ENCODE measurements at regions of chr2 and their contacts with region 1.

Region 1: GRCh38 chr2:230411570-230412370 is 4.2 kb upstream of the SP100 start:
- DNase-seq: peak; percentile 92
- H3K4me3 ChIP-seq: peak overlapping the region; percentile 64 to 81 (median 70)
- H3K27ac ChIP-seq: peak overlapping the region; percentile 83 to 92 (median 92)
- H3K4me1 ChIP-seq: peaks cover 46 to 58% (median 49%) of the 10 kb centered on the region in 4 donors
- H3K27me3 ChIP-seq: no peaks in the 10 kb centered on the region
- CTCF ChIP-seq: no peak
- EP300 ChIP-seq: no peak
- POLR2A ChIP-seq: peak; percentile 11

Region 2: GRCh38 chr2:230219419-230220331 is 192.1 kb before region 1 on chr2 and contains the start of gene SP110:
- intact Hi-C with region 1: loop called (anchors 10 kb)
- DNase-seq: peak; percentile 95
- H3K4me3 ChIP-seq: peak within 1 kb of the TSS; percentile 58 to 77 (median 68)
- H3K27ac ChIP-seq: peak within 1 kb of the TSS; percentile 71 to 78 (median 76)
- H3K4me1 ChIP-seq: peaks cover 7 to 27% (median 23%) of the 10 kb centered on the region in 4 donors
- H3K27me3 ChIP-seq: no peaks in the 10 kb centered on the region
- CTCF ChIP-seq: no peak
- EP300 ChIP-seq: no peak
- POLR2A ChIP-seq: no peak
- total RNA-seq, gene SP110: 14.5 to 24.9 (median 18.8) TPM

Measured in esophagus muscularis mucosa (tissue), 4 donors.